Heart right ventricle (tissue), 16 donors: ENCODE measurements at regions of chr6 and their contacts with region 1.

Region 1: DNA sequence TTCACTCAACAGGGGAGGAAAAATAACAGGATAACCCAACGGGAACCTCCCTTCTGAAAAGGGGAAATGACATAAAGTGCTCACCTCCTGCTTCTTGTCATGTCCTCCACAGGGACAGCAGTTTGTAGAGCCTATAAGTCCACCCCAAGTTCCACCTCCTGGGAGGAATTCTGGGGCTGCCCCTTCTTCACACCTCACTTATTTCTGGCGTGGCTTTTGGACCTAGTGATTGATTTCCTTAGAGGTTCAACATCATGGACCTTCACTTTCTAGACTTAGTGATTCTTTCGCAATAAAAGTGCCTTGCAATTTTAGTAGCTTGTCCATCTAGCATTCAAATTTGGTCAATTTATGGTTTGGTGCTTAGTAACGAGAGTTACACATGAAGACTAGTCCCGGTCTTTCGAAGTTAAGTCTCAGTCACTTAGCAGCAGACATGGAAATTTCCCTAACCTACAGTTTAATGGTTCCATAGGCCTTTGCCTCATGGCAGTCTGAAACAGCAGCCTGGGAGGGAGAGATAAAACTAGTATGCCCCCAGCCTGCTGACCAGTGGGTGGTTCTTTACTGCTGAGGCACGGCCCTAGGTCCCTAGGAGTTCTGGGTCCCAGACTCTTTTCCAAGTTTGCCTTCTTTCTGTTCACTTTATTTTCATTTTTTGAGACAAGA is 59.2 kb upstream of the CDKAL1 start:
- DNase-seq: no peak
- ATAC-seq: no peak
- H3K4me3 ChIP-seq: no peak overlapping the region
- H3K27ac ChIP-seq: no peak overlapping the region
- H3K4me1 ChIP-seq: peaks cover 0 to 20% (median 0%) of the 10 kb centered on the region in 9 donors
- H3K27me3 ChIP-seq: no peaks in the 10 kb centered on the region
- CTCF ChIP-seq: no peak

Region 2: GRCh38 chr6:20056350-20056992 is 418.5 kb before region 1 on chr6:
- intact Hi-C with region 1: no loop called
- DNase-seq: no peak
- ATAC-seq: peak in 1 of 8 donors; percentile 66
- H3K4me3 ChIP-seq: no peak overlapping the region
- H3K27ac ChIP-seq: no peak overlapping the region
- H3K4me1 ChIP-seq: no peaks in the 10 kb centered on the region
- H3K27me3 ChIP-seq: no peaks in the 10 kb centered on the region
- CTCF ChIP-seq: peak in 8 of 9 donors; percentile 21 to 63 (median 56)

Region 3: DNA sequence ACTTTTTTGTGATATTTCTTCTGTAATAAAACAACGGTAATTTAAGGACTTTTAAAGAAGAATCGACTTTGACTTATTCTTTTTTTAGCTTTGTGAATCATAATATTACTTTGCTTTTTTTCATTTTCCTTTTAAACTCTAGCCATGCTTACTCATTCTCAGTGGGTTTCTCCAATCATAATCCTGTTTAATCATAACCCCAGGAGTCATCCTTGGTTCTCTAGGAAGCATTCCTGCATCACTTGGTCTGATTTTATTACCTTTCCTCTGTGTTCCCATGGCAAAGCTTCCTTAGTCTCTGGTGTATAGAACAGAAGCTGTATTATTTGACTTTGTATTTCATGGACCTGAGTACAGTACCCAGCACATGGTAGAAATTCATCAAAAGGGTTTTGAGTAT is 282.8 kb after region 1 on chr6:
- intact Hi-C with region 1: loop called in 1 of 10 experiments (anchors 5 kb)
- DNase-seq: no peak
- ATAC-seq: no peak
- H3K4me3 ChIP-seq: no peak overlapping the region
- H3K27ac ChIP-seq: no peak overlapping the region
- H3K4me1 ChIP-seq: no peaks in the 10 kb centered on the region
- H3K27me3 ChIP-seq: no peaks in the 10 kb centered on the region
- CTCF ChIP-seq: no peak